ENCODE measurements at regions of chr10 and their contacts with region 1.

Region 1: GRCh38 chr10:77586719-77587415 is 50.7 kb downstream of the KCNMA1 start:
- DNase-seq: peak in 1 of 2 experiments; percentile 58
- H3K4me3 ChIP-seq: no peak overlapping the region
- H3K4me3 Mint-ChIP-seq: no peak overlapping the region
- H3K27ac Mint-ChIP-seq: peak overlapping the region; percentile 73
- H3K4me1 ChIP-seq: peaks cover 22% of the 10 kb centered on the region; the same call in 1 of the 2 replicates
- H3K4me1 Mint-ChIP-seq: peaks cover 10% of the 10 kb centered on the region
- H3K27me3 ChIP-seq: no peaks in the 10 kb centered on the region
- H3K27me3 Mint-ChIP-seq: no peaks in the 10 kb centered on the region
- CTCF ChIP-seq: peak in 1 of 2 experiments; percentile 17

Region 2: DNA sequence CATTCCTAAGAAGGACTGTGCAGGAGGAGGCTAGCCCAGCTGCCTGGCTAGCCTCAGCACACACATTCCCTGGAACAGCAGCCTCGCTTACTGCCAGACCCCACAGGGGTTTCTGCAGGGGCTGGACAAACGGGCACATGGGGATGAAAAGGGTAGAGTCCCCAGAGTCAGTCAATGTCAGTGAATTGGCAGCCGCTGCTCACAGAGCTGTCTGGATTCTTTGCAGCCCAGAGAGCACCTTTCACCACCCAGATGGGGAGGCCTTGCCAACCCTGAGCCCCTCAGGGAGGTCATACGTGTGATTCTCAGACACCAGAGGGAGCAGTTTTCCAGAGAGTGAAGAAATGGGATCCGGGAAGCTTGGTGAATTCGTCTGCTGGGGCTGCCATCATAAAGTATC is 92.5 kb before region 1 on chr10:
- CTCF ChIA-PET with region 1: no interaction called
- POLR2A ChIA-PET with region 1: no interaction called
- intact Hi-C with region 1: loop called (anchors 5 kb)
- DNase-seq: peak in 1 of 2 experiments; percentile 38
- H3K4me3 ChIP-seq: no peak overlapping the region
- H3K4me3 Mint-ChIP-seq: no peak overlapping the region
- H3K27ac Mint-ChIP-seq: no peak overlapping the region
- H3K4me1 ChIP-seq: peaks cover 9% of the 10 kb centered on the region
- H3K4me1 Mint-ChIP-seq: peaks cover 12% of the 10 kb centered on the region
- H3K27me3 ChIP-seq: no peaks in the 10 kb centered on the region
- H3K27me3 Mint-ChIP-seq: no peaks in the 10 kb centered on the region
- CTCF ChIP-seq: peak; percentile 34 to 48